ENCODE measurements at regions of chr5 and their contacts with region 1.

Region 1: GRCh38 chr5:100777680-100778281 is 125.3 kb downstream of the ST8SIA4 start:
- DNase-seq: peak; percentile 89
- H3K4me3 ChIP-seq: no peak overlapping the region
- H3K27ac ChIP-seq: peak overlapping the region; percentile 73
- H3K4me1 ChIP-seq: peaks cover 20% of the 10 kb centered on the region
- H3K27me3 ChIP-seq: no peaks in the 10 kb centered on the region
- CTCF ChIP-seq: no peak

Region 2: DNA sequence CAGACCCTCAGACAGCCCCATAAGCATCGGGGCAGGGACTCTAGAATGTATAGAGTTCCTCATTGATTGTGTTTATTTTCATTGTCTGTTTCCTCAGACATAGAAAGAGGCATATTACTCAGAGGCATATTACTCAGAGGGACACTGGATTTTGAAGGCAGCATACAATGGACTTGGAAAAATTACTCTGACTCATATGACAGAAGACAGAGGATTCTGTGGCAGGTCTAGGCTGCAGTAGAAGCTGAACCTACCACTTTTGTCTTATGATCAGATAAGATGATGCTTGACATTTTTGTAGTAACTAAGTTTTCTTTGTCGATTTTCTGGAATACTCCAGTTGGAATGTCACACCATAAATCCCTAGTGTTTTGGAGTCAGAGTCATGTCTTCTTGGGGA is 20.1 kb after region 1 on chr5:
- CTCF ChIA-PET with region 1: no interaction called
- POLR2A ChIA-PET with region 1: no interaction called
- intact Hi-C with region 1: no loop called
- DNase-seq: no peak
- H3K4me3 ChIP-seq: no peak overlapping the region
- H3K27ac ChIP-seq: no peak overlapping the region
- H3K4me1 ChIP-seq: no peaks in the 10 kb centered on the region
- H3K27me3 ChIP-seq: no peaks in the 10 kb centered on the region
- CTCF ChIP-seq: no peak

Region 3: GRCh38 chr5:100903039-100903887 is 125.5 kb after region 1 on chr5 and contains the start of gene ST8SIA4:
- CTCF ChIA-PET with region 1: interaction called, 4 read pairs
- POLR2A ChIA-PET with region 1: no interaction called
- intact Hi-C with region 1: loop called (anchors 5 kb)
- DNase-seq: peak; percentile 71
- H3K4me3 ChIP-seq: peak within 1 kb of the TSS; percentile 36
- H3K27ac ChIP-seq: no peak within 1 kb of the TSS
- H3K4me1 ChIP-seq: peaks cover 15% of the 10 kb centered on the region
- H3K27me3 ChIP-seq: peaks cover 85% of the 10 kb centered on the region
- CTCF ChIP-seq: no peak
- total RNA-seq, gene ST8SIA4: 0.35 and 0.47 TPM in 2 replicates

Region 4: GRCh38 chr5:101143526-101143925 is 365.7 kb after region 1 on chr5:
- CTCF ChIA-PET with region 1: no interaction called
- POLR2A ChIA-PET with region 1: no interaction called
- intact Hi-C with region 1: loop called (anchors 10 kb)
- DNase-seq: no peak
- H3K4me3 ChIP-seq: no peak overlapping the region
- H3K27ac ChIP-seq: no peak overlapping the region
- H3K4me1 ChIP-seq: no peaks in the 10 kb centered on the region
- H3K27me3 ChIP-seq: peaks cover 12% of the 10 kb centered on the region
- CTCF ChIP-seq: no peak

Measured in A673 (cell line).